GM18951 (cell line): ENCODE measurements at regions of chr22 and their contacts with region 1.

Region 1: DNA sequence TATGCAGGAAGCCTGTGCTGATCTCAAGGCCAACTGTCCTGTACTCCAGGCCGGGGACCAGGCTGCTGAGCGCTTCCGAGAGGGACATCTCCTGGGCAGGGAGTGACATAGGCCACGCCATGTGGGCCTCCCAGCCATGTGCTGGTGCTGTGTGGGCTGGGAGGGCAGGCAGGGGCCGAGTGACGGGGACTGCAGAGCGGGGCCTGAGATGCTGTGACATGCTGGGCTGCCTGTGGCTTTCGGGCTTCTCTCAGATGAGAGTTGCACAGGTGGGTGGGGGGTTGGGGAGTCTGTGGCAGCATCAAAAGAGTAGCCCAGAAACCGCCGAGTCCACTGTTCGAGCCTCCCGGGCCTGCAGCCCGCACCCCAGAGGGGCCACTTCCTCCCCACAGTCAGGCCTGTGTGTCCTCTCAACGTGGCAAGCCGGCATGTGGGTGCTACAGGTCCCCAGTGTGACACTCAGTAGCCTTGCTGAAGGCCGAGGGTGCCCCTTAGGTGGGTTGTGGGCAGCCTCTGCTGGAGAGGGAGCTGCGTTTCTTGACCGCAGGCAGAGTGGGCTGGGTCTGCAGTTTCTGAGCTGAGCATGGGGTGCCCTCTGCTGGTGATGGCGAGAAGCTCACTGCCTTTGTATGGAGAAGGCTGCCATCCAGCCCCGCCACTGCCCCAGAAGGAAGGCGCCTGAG is 101.2 kb downstream of the BCR start:
- POLR2A ChIP-seq: no peak

Region 2: GRCh38 chr22:22810018-22810427 is 471.5 kb before region 1 on chr22:
- in situ Hi-C with region 1: loop called (anchors 25 kb)
- POLR2A ChIP-seq: no peak

Region 3: DNA sequence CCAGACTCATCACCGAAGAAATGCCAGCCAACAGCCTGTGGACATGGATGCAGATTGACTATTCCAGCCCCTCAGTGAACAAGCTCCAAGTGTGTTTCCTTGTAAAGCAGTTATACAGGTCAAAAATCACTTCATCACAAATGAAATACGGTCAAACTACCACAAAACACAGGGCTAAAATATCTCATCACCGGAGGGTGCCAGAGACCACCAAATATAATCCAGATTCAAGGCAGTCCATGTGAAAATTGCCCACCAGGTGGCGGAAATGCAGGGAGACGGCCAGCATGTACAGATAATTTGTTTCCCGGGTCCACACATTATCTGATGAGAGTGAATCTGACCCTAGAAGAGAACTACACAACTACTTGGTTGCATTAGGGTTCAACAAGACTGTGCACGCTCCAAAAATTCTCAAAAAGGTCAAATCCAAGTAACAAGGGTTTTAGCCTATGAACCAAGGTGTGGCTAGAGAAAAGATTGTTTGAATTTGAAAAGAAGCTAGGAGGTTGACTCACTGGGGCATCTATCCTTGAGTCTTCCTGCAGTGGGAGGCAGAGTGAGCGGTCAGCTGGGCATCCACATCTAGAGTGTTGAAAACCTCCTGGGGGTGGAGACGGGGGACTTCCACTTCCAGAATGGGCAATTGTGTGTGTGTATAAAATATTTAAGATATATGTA is 322.3 kb before region 1 on chr22:
- in situ Hi-C with region 1: loop called (anchors 5 kb)
- POLR2A ChIP-seq: no peak

Region 4: GRCh38 chr22:23178512-23179254 is 102.9 kb before region 1 on chr22:
- in situ Hi-C with region 1: loop called (anchors 5 kb)
- POLR2A ChIP-seq: no peak